ENCODE measurements at regions of chr22 and their contacts with region 1.

Region 1: DNA sequence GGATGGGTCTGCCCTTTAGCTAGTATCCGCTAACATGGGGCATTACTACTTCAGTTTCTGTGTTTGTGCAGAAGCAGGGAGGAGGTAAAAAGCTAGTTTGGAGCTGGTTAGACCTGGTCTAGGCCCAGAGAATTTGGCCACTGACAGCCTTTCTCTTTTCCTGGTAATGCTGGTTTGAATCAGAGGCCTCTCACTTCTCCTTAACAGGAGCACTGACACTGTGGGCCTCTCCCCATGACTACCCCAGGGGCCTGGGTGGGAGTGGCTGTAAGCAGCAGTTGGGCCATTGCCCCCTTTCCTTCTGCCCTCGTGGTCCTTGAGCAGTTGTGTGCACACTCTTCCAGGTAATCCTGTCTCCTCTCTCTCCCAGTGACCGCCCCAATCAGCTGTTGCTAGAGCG is 8.5 kb upstream of the SLC25A18 start:
- DNase-seq: no peak
- H3K4me3 ChIP-seq: no peak overlapping the region
- H3K27ac ChIP-seq: no peak overlapping the region
- H3K4me1 ChIP-seq: no peaks in the 10 kb centered on the region
- H3K27me3 ChIP-seq: no peaks in the 10 kb centered on the region
- CTCF ChIP-seq: no peak

Region 2: GRCh38 chr22:17587629-17588028 is 32.8 kb after region 1 on chr22:
- CTCF ChIA-PET with region 1: interaction called, 10 read pairs
- POLR2A ChIA-PET with region 1: no interaction called
- intact Hi-C with region 1: no loop called
- DNase-seq: no peak
- H3K4me3 ChIP-seq: no peak overlapping the region
- H3K27ac ChIP-seq: no peak overlapping the region
- H3K4me1 ChIP-seq: no peaks in the 10 kb centered on the region
- H3K27me3 ChIP-seq: no peaks in the 10 kb centered on the region
- CTCF ChIP-seq: no peak

Region 3: DNA sequence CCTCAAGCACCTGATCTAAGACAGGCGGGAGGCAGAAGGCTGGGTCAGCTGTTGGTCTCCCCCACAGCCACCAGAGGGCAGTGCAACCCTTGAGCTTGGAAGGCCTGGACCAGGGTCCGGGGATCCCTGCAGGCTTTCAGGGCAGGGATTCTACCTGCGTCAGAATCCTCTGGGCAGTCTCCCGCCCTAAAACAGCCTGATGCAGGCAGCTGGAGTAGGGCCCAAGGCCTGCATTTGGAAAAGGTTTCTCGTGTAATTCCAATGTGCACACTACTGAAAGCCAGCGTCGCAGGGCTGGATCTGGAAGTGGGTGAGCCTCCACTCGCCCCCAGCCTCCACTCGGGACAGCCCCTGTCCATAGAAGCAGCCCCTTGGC is 187.7 kb after region 1 on chr22:
- CTCF ChIA-PET with region 1: no interaction called
- POLR2A ChIA-PET with region 1: no interaction called
- intact Hi-C with region 1: loop called (anchors 5 kb)
- DNase-seq: peak; percentile 48 to 54
- H3K4me3 ChIP-seq: no peak overlapping the region
- H3K27ac ChIP-seq: no peak overlapping the region
- H3K4me1 ChIP-seq: no peaks in the 10 kb centered on the region
- H3K27me3 ChIP-seq: no peaks in the 10 kb centered on the region
- CTCF ChIP-seq: peak; percentile 74

Region 4: DNA sequence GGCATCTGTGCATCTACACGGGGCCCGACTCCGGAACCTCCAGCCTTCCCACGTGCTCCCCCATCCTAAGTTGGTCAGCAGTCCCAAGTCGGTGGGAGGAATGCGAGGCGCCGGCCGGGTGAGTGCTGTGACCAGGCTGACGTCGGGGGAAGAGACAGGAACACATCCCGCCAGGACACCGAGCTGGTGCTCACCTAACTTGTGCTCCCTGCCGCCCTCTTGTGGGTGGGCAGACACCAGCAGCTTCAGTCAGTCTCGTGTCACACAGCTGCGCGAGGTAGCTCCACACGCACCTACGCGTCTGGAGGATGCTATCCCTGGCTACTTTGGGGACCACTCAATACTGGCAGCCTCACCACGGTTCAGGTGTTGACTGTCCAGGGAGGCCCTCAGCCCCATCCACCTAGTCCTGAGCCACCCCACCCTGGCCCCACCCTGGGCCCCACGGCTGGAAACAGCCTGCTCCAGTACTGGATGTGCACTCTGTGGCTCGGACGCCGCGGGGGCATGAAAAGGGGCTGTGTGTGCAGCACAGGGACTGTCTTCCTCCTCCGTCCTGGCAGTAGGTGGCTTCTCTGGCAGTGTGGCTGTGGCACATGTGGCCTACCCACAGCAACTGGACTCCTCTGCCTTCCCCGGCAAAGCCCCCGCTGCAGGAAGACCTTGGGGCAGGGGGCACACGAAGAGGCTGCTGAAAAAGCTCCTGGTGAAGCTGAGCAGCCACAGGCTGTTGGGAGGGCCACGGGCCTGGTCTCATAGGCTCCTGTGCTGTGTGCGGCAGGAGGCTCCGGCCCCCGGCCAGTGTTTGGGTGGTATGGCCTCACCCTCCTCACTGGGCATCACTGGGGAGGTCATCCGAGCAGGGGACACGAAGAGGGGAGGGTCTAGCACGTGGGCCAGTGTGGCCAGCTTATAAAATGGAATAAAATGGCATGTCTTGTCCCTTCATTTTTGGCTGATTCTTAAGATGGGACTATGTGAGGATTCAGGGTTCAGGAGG is 230.7 kb after region 1 on chr22:
- CTCF ChIA-PET with region 1: interaction called, 8 read pairs
- POLR2A ChIA-PET with region 1: no interaction called
- intact Hi-C with region 1: loop called (anchors 2 kb)
- DNase-seq: peak in 1 of 2 experiments; percentile 68
- H3K4me3 ChIP-seq: no peak overlapping the region
- H3K27ac ChIP-seq: no peak overlapping the region
- H3K4me1 ChIP-seq: peaks cover 16% of the 10 kb centered on the region
- H3K27me3 ChIP-seq: no peaks in the 10 kb centered on the region
- CTCF ChIP-seq: peak; percentile 70

Region 5: DNA sequence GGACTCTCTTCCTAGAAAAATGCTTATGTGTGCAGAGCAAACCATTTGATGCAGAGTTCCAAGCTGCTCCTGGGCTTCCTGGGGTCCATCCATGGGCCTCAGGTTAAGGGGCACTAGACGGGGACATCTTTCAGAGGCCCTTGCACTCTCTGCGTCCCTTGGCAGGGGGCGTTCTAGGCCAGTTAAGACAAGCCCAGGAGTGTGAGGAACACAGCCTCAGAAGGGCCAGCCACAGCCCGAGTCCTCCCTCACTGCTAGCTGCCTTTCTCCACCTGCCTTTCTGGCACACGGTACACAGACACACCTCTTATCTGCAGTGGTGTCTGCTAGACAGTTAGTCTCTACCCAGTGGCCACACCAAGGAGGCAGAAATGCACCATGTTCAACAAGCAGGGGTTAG is 237.5 kb after region 1 on chr22:
- CTCF ChIA-PET with region 1: no interaction called
- POLR2A ChIA-PET with region 1: no interaction called
- intact Hi-C with region 1: loop called (anchors 2 kb)
- DNase-seq: no peak
- H3K4me3 ChIP-seq: no peak overlapping the region
- H3K27ac ChIP-seq: no peak overlapping the region
- H3K4me1 ChIP-seq: no peaks in the 10 kb centered on the region
- H3K27me3 ChIP-seq: no peaks in the 10 kb centered on the region
- CTCF ChIP-seq: no peak

Measured in PC-9 (cell line).